PC-3 (cell line): ENCODE measurements at regions of chr3 and their contacts with region 1.

Region 1: DNA sequence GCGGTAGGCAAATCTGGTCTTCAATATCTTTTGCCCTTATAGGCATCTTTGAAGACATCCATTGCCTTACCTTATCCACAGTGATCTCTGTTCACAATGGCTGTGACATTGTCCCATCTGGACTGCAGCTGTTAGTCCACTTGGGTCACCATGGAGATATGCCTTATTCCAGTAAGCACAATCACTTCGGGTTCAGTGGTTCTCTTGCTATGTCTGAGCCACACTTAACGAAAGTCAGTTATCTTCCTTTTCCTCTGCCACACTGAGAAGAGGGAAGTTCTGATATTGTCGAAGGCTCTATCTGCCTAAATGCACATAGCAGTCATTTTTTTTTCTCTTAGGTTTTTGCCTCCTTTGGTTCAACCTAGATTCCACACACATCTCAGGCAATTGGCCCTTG is 119.0 kb upstream of the SATB1 start:
- DNase-seq: no peak
- ATAC-seq: no peak
- H3K4me3 ChIP-seq: no peak overlapping the region
- H3K27ac ChIP-seq: no peak overlapping the region
- H3K4me1 ChIP-seq: peaks cover 15% of the 10 kb centered on the region; the same call in 1 of the 2 replicates
- H3K27me3 ChIP-seq: no peaks in the 10 kb centered on the region
- CTCF ChIP-seq: no peak

Region 2: DNA sequence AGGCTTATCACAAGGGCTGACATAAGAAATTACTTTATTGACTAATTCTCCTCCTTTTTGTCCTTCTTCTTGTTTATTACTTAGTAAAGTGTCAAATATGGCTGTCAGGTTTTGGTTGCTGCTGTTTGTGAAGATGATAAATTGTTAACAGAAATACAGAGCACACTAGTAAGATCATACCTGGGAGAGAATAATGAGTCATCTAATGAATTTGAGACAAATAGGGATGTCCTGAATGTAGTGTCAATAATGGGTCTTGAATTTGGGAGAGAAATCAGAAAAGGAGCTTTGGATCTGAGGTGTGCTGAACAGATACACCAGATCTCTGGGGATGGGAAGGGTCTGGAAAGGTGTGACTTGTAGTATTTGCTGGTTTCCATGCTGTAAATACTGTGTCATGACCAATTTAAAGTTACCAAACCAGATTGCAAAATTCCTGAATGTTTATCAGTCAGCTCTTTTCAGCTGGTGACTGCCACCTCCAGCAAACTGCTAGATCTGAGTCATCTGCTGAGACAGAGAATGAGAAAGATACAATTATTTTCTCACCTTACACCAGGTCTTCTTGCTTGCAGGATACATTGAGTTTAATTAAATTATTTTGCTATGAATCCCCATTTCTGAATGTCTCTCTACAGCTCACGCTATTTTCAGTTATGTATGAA is 42.3 kb before region 1 on chr3:
- CTCF ChIA-PET with region 1: no interaction called
- POLR2A ChIA-PET with region 1: no interaction called
- intact Hi-C with region 1: loop called (anchors 5 kb)
- DNase-seq: peak; percentile 71
- ATAC-seq: peak; percentile 78
- H3K4me3 ChIP-seq: no peak overlapping the region
- H3K27ac ChIP-seq: 0 out of 2 replicates have a peak overlapping the region, but pooled peaks have one; percentile 4
- H3K4me1 ChIP-seq: peaks cover 17% of the 10 kb centered on the region
- H3K27me3 ChIP-seq: no peaks in the 10 kb centered on the region
- CTCF ChIP-seq: no peak